ENCODE measurements at regions of chr11 and their contacts with region 1.

Region 1: DNA sequence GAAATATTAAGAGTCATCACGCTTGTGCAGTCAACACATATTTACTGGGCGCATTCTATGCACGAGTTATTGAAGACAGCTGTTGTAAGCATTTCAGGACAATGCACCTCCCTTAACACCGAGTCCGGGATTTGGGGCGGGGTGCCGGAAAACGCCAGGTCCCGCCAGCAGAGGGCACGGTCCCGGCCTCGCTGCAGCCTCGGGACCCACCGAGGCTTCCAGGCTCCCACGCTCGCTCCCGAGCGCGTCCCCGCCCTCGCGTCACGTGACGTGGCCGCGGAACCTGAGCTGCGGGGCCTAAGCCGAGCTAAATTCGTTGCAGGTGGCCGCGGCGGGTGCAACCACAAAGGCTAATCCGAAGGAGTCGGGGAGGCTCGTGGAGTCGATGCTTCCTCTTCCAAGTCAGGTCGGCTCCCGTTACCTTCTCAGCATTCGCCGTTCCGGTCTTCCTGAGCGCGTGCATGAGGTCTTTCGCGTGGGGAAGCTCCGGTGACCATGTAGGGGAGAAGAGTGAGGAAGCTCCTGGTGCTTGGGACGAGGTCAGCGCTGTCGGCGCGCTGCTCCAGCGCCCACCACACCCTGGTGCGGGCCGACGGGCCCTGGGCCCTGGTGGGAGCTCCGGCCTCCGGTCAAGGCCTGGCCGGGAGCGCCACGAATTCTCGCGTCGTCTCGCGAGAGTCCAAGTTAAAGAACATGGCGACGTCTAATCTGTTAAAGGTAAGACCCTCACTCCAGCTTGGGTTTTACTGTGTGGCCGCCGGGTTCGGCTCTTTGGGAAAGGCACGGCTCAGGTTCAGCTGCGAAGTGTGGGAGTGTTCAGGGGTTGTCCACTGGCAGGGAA is at the start of gene CUL5:
- DNase-seq: peak; percentile 75 to 96 (median 92)

Region 2: DNA sequence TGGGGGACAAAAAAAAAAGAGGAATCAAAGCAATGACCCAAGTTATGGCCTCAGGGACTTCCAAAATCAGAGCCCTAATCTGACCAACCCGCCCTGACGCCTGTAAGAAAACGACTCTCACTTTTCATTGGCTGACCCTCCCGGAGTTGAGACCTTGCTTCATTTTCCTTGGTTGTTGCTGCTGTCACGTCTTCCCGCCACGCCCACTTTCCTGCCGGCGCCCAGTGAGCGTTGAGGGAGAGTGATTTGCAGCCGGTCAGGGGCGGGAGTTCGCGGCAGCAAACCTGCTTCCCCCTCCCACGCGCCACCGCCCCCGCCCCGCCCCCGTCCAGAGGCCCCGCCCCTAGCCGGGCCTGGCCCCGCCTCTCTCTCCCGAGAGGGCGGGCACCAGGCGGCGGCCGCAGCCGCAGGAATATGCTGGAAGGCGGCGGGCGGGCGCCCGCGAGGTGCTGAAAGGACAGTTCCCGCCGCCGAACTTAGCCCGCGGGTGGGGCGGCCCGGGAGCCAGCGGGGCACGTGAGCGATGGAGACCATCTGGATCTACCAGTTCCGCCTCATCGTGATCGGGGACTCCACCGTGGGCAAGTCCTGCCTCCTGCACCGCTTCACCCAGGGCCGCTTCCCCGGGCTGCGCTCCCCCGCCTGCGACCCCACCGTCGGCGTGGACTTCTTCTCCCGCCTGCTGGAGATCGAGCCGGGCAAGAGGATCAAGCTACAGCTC is 80.7 kb before region 1 on chr11 and contains the start of gene RAB39A:
- intact Hi-C with region 1: loop called (anchors 10 kb)
- DNase-seq: peak; percentile 75 to 97 (median 91)

Region 3: DNA sequence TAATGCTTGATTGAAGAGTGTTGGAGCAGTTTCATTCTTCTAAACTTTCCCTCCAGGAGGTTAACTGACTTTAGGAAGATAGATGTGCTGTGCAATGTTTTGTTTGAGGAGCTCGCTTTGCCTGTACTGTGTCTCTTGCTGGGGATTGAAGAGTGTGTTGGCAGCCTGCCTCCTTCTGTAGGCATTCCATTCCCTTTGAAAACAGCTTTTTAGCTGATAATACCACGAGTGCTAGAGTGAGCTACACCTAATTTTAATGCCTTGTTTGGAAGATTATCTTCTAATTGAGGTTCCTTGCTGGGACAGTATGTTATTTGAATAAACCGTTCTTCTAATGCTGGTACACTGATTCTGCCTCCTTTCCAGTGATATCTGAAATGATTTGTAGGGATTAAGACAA is 663.2 kb after region 1 on chr11:
- intact Hi-C with region 1: loop called (anchors 10 kb)
- DNase-seq: peak in 23 of 42 donors; percentile 4 to 79 (median 32)

Measured in head of caudate nucleus (tissue), 42 donors.